H1 (cell line): ENCODE measurements at regions of chr21 and their contacts with region 1.

Region 1: GRCh38 chr21:17726047-17726830 is 92.9 kb downstream of the C21orf91 start:
- DNase-seq: no peak
- H3K4me3 ChIP-seq: no peak overlapping the region
- H3K27ac ChIP-seq: no peak overlapping the region
- H3K4me1 ChIP-seq: no peaks in the 10 kb centered on the region
- H3K27me3 ChIP-seq: no peaks in the 10 kb centered on the region
- CTCF ChIP-seq: peak in 2 of 3 experiments; percentile 29 to 60; a peak in 3 of 4 replicates
- EP300 ChIP-seq: no peak
- POLR2A ChIP-seq: no peak
- RAD21 ChIP-seq: peak; percentile 26 to 49; a peak in 3 of 4 replicates

Region 2: GRCh38 chr21:17709266-17709611 is 17.0 kb before region 1 on chr21:
- CTCF ChIA-PET with region 1: interaction called, 10 read pairs
- POLR2A ChIA-PET with region 1: no interaction called
- DNase-seq: no peak
- H3K4me3 ChIP-seq: no peak overlapping the region
- H3K27ac ChIP-seq: no peak overlapping the region
- H3K4me1 ChIP-seq: no peaks in the 10 kb centered on the region
- H3K27me3 ChIP-seq: no peaks in the 10 kb centered on the region
- CTCF ChIP-seq: no peak
- EP300 ChIP-seq: no peak
- POLR2A ChIP-seq: no peak
- RAD21 ChIP-seq: no peak